GM13976 (cell line): ENCODE measurements at regions of chr2 and their contacts with region 1.

Region 1: GRCh38 chr2:164737612-164738081 is 104.0 kb downstream of the COBLL1 start:
- DNase-seq: peak; percentile 24
- CTCF ChIP-seq: peak; percentile 31

Region 2: GRCh38 chr2:164412831-164413230 is 324.8 kb before region 1 on chr2:
- in situ Hi-C with region 1: no loop called
- DNase-seq: no peak
- CTCF ChIP-seq: no peak

Region 3: GRCh38 chr2:164917296-164917903 is 179.8 kb after region 1 on chr2:
- in situ Hi-C with region 1: loop called (anchors 25 kb)
- DNase-seq: no peak
- CTCF ChIP-seq: no peak

Region 4: GRCh38 chr2:165203689-165204559 is 466.3 kb after region 1 on chr2 and contains the start of gene SCN3A:
- in situ Hi-C with region 1: loop called (anchors 25 kb)
- DNase-seq: no peak
- CTCF ChIP-seq: peak; percentile 69